ENCODE measurements at regions of chr7 and their contacts with region 1.

Region 1: DNA sequence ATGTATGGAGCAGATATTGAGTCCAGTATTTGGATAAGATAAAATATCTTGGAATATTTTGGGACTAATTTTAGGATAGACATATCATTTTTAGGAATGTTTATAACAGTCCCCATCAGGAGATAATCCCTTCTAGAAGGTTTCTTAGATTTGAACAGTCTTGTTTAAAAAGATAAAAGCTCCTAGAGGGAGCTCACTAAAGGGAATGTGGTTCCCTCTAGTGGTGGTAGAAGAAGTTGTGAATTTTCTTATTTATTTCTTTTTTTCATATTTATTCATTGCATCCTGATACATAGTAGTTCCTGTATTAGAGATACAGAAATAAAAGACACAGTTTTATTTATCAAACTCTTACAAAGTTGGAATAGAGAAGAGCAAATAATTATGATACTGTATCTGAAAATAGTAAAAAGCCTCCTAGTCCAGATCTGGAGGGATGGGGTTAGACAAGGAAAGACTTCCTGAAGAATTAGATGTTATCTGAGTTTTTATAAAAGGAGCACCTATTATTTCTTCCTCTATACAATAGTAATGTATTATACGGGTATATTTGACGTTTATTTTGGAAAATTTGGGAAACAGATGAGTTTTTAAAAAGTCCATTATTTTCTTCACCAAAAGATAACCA is 24.5 kb upstream of the KLF14 start:
- DNase-seq: no peak
- H3K4me3 ChIP-seq: no peak overlapping the region
- H3K27ac ChIP-seq: no peak overlapping the region
- H3K4me1 ChIP-seq: no peaks in the 10 kb centered on the region
- H3K27me3 ChIP-seq: no peaks in the 10 kb centered on the region
- CTCF ChIP-seq: peak in 2 of 3 experiments; percentile 41 to 44; a peak in 2 of 4 replicates
- EP300 ChIP-seq: no peak
- POLR2A ChIP-seq: no peak
- RAD21 ChIP-seq: peak; percentile 62 to 74

Region 2: GRCh38 chr7:130231792-130232191 is 526.8 kb before region 1 on chr7:
- CTCF ChIA-PET with region 1: no interaction called
- POLR2A ChIA-PET with region 1: no interaction called
- DNase-seq: no peak
- H3K4me3 ChIP-seq: no peak overlapping the region
- H3K27ac ChIP-seq: no peak overlapping the region
- H3K4me1 ChIP-seq: peaks cover 0 to 4% (median under 1%) of the 10 kb centered on the region in 4 experiments; a peak in 1 of 7 replicates
- H3K27me3 ChIP-seq: no peaks in the 10 kb centered on the region
- CTCF ChIP-seq: no peak
- EP300 ChIP-seq: no peak
- POLR2A ChIP-seq: no peak
- RAD21 ChIP-seq: no peak

Region 3: GRCh38 chr7:130655286-130655685 is 103.3 kb before region 1 on chr7:
- CTCF ChIA-PET with region 1: no interaction called
- POLR2A ChIA-PET with region 1: no interaction called
- DNase-seq: no peak
- H3K4me3 ChIP-seq: no peak overlapping the region
- H3K27ac ChIP-seq: no peak overlapping the region
- H3K4me1 ChIP-seq: no peaks in the 10 kb centered on the region
- H3K27me3 ChIP-seq: no peaks in the 10 kb centered on the region
- CTCF ChIP-seq: no peak
- EP300 ChIP-seq: no peak
- POLR2A ChIP-seq: no peak
- RAD21 ChIP-seq: no peak

Region 4: GRCh38 chr7:130733931-130734814 is 24.4 kb before region 1 on chr7 and contains the start of gene KLF14:
- CTCF ChIA-PET with region 1: interaction called, 10 read pairs
- POLR2A ChIA-PET with region 1: no interaction called
- DNase-seq: peak in 1 of 2 experiments; percentile 67
- H3K4me3 ChIP-seq: peak within 1 kb of the TSS; percentile 36 to 70 (median 44)
- H3K27ac ChIP-seq: no peak within 1 kb of the TSS
- H3K4me1 ChIP-seq: 0 out of 7 replicates have a peak, but pooled peaks cover 0 to 4% (median 0%) of the 10 kb centered on the region in 4 experiments
- H3K27me3 ChIP-seq: peaks cover 26 to 69% (median 51%) of the 10 kb centered on the region in 4 experiments
- CTCF ChIP-seq: no peak
- EP300 ChIP-seq: no peak
- POLR2A ChIP-seq: no peak
- RAD21 ChIP-seq: no peak
- total RNA-seq, gene KLF14: not detected in 2 replicates

Region 5: GRCh38 chr7:130741331-130741995 is 17.1 kb before region 1 on chr7:
- CTCF ChIA-PET with region 1: interaction called, 11 read pairs
- POLR2A ChIA-PET with region 1: no interaction called
- DNase-seq: no peak
- H3K4me3 ChIP-seq: no peak overlapping the region
- H3K27ac ChIP-seq: no peak overlapping the region
- H3K4me1 ChIP-seq: no peaks in the 10 kb centered on the region
- H3K27me3 ChIP-seq: peaks cover 0 to 8% (median 3%) of the 10 kb centered on the region in 4 experiments; a peak in 6 of 7 replicates
- CTCF ChIP-seq: no peak
- EP300 ChIP-seq: no peak
- POLR2A ChIP-seq: no peak
- RAD21 ChIP-seq: no peak

Region 6: GRCh38 chr7:130791746-130792145 is 33.2 kb after region 1 on chr7:
- CTCF ChIA-PET with region 1: interaction called, 11 read pairs
- POLR2A ChIA-PET with region 1: no interaction called
- DNase-seq: no peak
- H3K4me3 ChIP-seq: no peak overlapping the region
- H3K27ac ChIP-seq: no peak overlapping the region
- H3K4me1 ChIP-seq: no peaks in the 10 kb centered on the region
- H3K27me3 ChIP-seq: no peaks in the 10 kb centered on the region
- CTCF ChIP-seq: no peak
- EP300 ChIP-seq: no peak
- POLR2A ChIP-seq: no peak
- RAD21 ChIP-seq: no peak